Left ventricle myocardium superior (tissue), 1 donor: ENCODE measurements at regions of chr17 and their contacts with region 1.

Region 1: GRCh38 chr17:64320613-64321553 is 57.8 kb upstream of the TEX2 start:
- DNase-seq: peak; percentile 61
- ATAC-seq: peak; percentile 77

Region 2: GRCh38 chr17:64081802-64082799 is 238.8 kb before region 1 on chr17:
- intact Hi-C with region 1: no loop called
- DNase-seq: no peak
- ATAC-seq: peak; percentile 31

Region 3: DNA sequence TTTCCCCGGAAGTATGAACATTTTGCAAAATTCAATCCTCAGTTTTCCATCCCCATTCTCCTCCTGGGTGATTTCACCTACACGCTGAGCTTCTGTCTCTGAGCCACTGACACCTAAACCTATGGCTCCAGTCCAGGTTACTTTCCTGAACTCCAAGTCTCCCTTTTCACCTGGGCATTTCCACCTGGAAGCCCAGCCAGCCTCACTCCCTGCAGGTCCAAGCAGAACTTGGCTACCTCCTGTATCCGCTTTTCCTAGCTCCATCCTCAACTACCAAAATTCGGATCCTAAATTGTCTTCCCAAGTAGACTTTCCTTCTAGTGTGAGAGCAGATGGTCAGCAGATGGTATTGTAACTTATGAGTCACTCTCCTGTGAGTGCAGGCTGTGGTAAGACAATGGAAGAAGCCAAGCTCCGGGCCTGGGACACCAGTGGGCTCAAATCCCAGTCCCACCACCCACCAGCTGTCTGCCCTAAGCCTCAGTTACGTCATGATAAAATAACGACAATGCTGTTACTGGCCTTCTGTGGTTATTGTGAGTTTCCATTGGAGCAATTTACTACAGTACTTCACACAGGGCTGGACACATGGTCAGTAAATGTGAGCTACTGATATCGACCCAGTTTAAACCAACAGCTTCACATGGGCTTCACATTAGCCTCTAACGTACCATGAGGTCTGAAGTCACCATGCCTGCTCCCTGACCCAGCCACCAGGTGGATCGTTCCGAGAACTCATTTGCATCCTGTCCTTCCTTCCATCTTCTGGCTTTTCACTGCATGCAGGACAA is 36.5 kb after region 1 on chr17:
- intact Hi-C with region 1: no loop called
- DNase-seq: peak; percentile 74
- ATAC-seq: peak; percentile 91

Region 4: GRCh38 chr17:64411999-64412771 is 91.3 kb after region 1 on chr17:
- intact Hi-C with region 1: loop called (anchors 2 kb)
- DNase-seq: peak; percentile 59
- ATAC-seq: peak; percentile 78